Testis (tissue), 5 donors: ENCODE measurements at regions of chr17 and their contacts with region 1.

Region 1: GRCh38 chr17:78865682-78866390 is 25.2 kb upstream of the USP36 start:
- DNase-seq: peak; percentile 90
- H3K4me3 ChIP-seq: no peak overlapping the region
- H3K27ac ChIP-seq: peak overlapping the region in 1 of 2 donors; percentile 16
- H3K4me1 ChIP-seq: peaks cover 12% of the 10 kb centered on the region
- H3K27me3 ChIP-seq: no peaks in the 10 kb centered on the region
- CTCF ChIP-seq: peak; percentile 75 to 90 (median 86)
- POLR2A ChIP-seq: no peak

Region 2: DNA sequence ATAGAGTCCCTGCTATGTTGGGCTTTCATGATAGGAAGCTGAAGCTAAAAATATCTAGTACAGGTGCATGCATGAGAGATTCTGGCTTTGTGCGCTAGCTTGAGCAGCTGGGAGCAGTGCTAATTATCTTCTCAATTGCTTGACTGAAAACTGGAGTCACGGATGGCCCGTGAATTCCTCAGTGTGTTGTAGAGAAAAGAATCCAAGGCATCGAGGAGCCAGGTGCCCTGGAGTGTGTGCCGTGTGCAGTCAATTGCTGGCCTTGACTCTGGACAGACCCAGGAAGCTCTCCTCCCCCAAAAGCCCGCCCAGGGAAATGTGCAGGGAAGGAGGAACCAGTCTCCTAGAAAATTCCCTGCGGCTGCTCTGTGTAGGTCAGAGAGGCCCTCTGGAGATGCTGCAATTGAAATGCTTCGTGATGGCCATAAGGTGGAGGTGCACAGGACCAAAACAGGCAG is 99.7 kb after region 1 on chr17:
- intact Hi-C with region 1: loop called (anchors 5 kb)
- DNase-seq: no peak
- H3K4me3 ChIP-seq: no peak overlapping the region
- H3K27ac ChIP-seq: no peak overlapping the region
- H3K4me1 ChIP-seq: peaks cover 5% of the 10 kb centered on the region
- H3K27me3 ChIP-seq: no peaks in the 10 kb centered on the region
- CTCF ChIP-seq: no peak
- POLR2A ChIP-seq: no peak